Activated naive CD4-positive, alpha-beta T cell treated with anti-CD3 and anti-CD28 coated beads for 36 hours (primary cell): ENCODE measurements at regions of chr4 and their contacts with region 1.

Region 1: DNA sequence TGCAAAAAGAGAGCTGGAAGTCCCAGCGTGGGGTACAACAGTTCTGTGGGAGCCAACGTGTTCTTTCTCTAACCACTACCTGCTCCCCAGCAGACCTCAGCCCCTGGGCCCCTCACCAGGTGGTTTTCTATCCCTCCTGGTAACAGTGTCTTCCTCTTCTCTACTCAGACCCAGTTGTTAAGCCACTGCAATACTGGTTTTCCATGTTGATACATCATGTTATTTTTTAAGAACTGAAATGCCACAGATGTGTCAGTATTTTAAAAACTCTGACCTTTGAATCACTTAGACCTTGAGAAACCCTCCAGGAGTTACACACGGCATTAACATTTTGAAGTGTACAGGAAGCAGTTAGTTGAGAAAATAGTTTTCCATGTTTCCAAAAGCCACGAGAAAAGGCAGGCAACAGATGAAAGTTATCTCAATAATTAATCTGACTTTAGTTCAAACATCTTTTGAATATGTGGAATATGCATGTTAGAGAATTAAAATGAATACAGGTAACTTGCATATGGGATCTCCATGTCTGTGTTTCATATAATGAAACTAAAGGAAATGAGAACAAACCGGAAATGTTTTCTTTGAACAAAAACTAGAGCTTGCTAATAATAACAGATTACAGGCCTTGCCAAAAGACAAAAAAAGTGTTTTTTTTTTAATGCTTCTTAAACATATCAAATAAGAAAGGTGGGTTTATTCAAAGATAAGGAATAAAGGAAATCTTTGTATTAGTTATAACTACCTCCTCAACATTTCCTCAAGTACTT is 108.8 kb downstream of the ZNF827 start:
- DNase-seq: peak; percentile 33
- H3K4me3 Mint-ChIP-seq: peak overlapping the region; percentile 23
- H3K27ac Mint-ChIP-seq: peak overlapping the region; percentile 13
- H3K4me1 Mint-ChIP-seq: peaks cover 41% of the 10 kb centered on the region
- H3K27me3 Mint-ChIP-seq: no peaks in the 10 kb centered on the region

Region 2: DNA sequence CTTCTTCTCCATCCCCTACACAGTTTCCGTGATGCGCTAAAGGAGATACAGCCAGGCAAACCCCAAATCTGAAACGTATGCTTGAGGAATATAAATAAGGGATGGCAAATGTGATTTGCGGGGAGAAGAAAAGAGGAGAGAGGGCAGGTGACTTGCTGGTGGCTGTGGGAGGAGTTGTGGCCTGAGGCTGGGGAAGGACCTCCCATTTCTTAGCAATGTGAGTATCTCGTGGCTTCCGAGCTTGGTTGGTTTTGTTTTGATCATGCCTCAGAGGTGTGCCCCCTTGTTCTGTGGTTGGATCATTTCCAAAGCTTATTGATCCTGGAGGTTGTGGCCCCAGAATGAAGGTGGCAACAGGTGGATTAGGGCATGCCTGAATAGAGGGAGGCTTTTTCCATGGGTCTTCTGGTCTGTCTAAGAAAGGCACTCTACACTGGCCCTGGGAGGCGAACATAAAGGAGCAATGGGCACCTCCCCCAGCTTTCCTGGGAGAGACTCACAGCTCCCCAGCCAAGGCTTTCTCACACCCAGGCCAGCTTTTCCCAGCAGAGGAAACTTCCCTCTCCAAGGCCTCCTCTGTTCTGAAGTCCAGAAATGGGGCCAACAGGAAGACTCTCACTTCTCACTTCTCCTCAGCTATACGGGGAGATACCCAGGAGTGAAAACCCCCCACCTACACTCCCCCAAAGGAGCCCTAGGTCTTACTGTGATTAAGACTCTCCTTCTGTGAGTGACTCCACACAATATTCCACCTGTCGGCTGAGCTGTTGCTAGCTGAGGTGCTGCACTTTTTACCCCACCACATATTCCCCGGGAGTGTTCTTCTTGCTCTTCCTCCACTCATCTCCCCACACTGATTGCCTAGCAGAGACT is 109.8 kb before region 1 on chr4:
- CTCF ChIA-PET with region 1: no interaction called
- intact Hi-C with region 1: loop called (anchors 1 kb)
- DNase-seq: peak; percentile 78
- H3K4me3 Mint-ChIP-seq: no peak overlapping the region
- H3K27ac Mint-ChIP-seq: peak overlapping the region; percentile 5
- H3K4me1 Mint-ChIP-seq: peaks cover 14% of the 10 kb centered on the region
- H3K27me3 Mint-ChIP-seq: peaks cover 10% of the 10 kb centered on the region

Region 3: GRCh38 chr4:146450524-146450923 is 620.7 kb after region 1 on chr4:
- CTCF ChIA-PET with region 1: no interaction called
- intact Hi-C with region 1: loop called (anchors 5 kb)
- DNase-seq: peak; percentile 23
- H3K4me3 Mint-ChIP-seq: no peak overlapping the region
- H3K27ac Mint-ChIP-seq: peak overlapping the region; percentile 14
- H3K4me1 Mint-ChIP-seq: peaks cover 34% of the 10 kb centered on the region
- H3K27me3 Mint-ChIP-seq: no peaks in the 10 kb centered on the region

Region 4: GRCh38 chr4:146465628-146466027 is 635.8 kb after region 1 on chr4:
- CTCF ChIA-PET with region 1: no interaction called
- intact Hi-C with region 1: no loop called
- DNase-seq: no peak
- H3K4me3 Mint-ChIP-seq: no peak overlapping the region
- H3K27ac Mint-ChIP-seq: no peak overlapping the region
- H3K4me1 Mint-ChIP-seq: peaks cover 21% of the 10 kb centered on the region
- H3K27me3 Mint-ChIP-seq: no peaks in the 10 kb centered on the region